ENCODE measurements at regions of chrX and their contacts with region 1.

Region 1: DNA sequence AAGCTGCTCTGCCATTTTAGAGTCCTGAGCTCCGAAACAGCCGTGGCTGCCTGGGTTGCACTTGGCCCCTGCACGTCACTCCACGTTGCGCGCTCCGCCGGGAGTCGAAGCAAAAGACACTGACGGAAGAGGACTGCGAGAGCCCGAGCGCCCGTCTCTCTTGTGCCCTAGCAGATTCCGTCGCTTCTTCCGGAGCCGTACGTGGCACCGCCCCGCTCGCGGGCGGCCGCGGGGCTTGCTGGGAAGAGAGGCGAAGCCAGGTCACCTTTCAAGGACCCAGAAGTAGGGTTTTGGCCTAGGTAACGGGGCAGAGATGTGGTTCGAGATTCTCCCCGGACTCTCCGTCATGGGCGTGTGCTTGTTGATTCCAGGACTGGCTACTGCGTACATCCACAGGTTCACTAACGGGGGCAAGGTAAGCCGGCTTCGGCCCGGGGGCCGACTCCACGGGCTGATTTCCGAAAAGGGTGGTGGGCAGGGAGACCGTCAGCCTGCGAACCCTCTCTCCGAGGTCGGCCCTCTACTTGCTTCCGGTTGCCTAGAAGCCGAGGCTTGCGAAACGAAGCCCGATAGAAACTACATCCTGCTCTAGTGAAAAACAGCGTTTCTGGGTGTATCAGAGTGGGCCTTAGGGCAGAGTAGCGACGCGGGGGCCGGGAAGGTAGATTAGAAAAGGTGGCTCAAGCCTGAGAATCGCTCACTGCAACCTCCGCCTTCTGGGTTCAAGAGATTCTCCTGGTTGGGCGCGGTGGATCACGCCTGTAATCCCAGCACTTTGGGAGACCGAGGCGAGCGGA is at the starts of genes NDUFA1 and RNF113A:
- DNase-seq: peak; percentile 59
- ATAC-seq: peak; percentile 95
- H3K4me3 ChIP-seq: peak within 1 kb of the TSS; percentile 68
- H3K27ac ChIP-seq: peak within 1 kb of the TSS; percentile 91
- H3K4me1 ChIP-seq: no peaks in the 10 kb centered on the region
- H3K27me3 ChIP-seq: no peaks in the 10 kb centered on the region
- CTCF ChIP-seq: no peak
- EP300 ChIP-seq: no peak
- POLR2A ChIP-seq: peak; percentile 96
- RAD21 ChIP-seq: no peak
- polyA plus RNA-seq, gene NDUFA1: 999 to 1,113 TPM
- polyA plus RNA-seq, gene RNF113A: 22.7 to 23.1 TPM

Region 2: GRCh38 chrX:119852382-119853353 is 19.1 kb before region 1 on chrX and contains the start of gene UPF3B:
- CTCF ChIA-PET with region 1: interaction called, 5 read pairs
- POLR2A ChIA-PET with region 1: interaction called, 19 read pairs
- RAD21 ChIA-PET with region 1: interaction called, 18 read pairs
- SMC1A ChIA-PET with region 1: interaction called, 18 read pairs
- in situ Hi-C with region 1: no loop called
- intact Hi-C with region 1: loop called (anchors 2 kb)
- DNase-seq: peak; percentile 84
- ATAC-seq: peak; percentile 96
- H3K4me3 ChIP-seq: peak within 1 kb of the TSS; percentile 70
- H3K27ac ChIP-seq: peak within 1 kb of the TSS; percentile 81
- H3K4me1 ChIP-seq: no peaks in the 10 kb centered on the region
- H3K27me3 ChIP-seq: no peaks in the 10 kb centered on the region
- CTCF ChIP-seq: no peak
- EP300 ChIP-seq: no peak
- POLR2A ChIP-seq: peak; percentile 78
- RAD21 ChIP-seq: no peak
- polyA plus RNA-seq, gene UPF3B: 24.6 to 27.0 TPM

Region 3: DNA sequence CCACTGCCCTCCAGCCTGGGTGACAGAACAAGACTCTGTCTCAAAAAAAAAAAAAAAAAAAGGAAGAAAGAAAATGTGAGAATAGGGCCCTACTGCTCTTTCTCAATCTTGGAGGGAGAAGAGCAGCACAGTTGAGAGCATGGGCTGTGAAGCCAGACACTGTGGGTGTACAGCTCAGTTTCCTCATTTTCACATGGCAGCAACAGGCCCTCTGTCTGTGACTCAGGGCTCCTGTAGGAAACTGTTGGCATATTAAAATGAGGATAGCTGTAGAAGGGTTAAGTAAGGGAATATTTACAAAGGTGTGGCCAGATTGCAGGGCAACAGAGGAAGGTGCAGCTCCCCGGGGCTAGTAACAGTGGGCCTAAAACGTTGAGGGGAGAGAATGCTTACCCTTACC is 27.3 kb after region 1 on chrX:
- CTCF ChIA-PET with region 1: no interaction called
- POLR2A ChIA-PET with region 1: no interaction called
- RAD21 ChIA-PET with region 1: no interaction called
- SMC1A ChIA-PET with region 1: no interaction called
- in situ Hi-C with region 1: no loop called
- intact Hi-C with region 1: no loop called
- DNase-seq: no peak
- ATAC-seq: no peak
- H3K4me3 ChIP-seq: no peak overlapping the region
- H3K27ac ChIP-seq: no peak overlapping the region
- H3K4me1 ChIP-seq: no peaks in the 10 kb centered on the region
- H3K27me3 ChIP-seq: no peaks in the 10 kb centered on the region
- CTCF ChIP-seq: no peak
- EP300 ChIP-seq: no peak
- POLR2A ChIP-seq: no peak
- RAD21 ChIP-seq: no peak